Activated CD4-positive, alpha-beta T cell treated with anti-CD3 and anti-CD28 coated beads, Interleukin-2, amount 10 ng/mL, durations not matched to agents 24 days and 14 days (primary cell): ENCODE measurements at regions of chr1 and their contacts with region 1.

Region 1: DNA sequence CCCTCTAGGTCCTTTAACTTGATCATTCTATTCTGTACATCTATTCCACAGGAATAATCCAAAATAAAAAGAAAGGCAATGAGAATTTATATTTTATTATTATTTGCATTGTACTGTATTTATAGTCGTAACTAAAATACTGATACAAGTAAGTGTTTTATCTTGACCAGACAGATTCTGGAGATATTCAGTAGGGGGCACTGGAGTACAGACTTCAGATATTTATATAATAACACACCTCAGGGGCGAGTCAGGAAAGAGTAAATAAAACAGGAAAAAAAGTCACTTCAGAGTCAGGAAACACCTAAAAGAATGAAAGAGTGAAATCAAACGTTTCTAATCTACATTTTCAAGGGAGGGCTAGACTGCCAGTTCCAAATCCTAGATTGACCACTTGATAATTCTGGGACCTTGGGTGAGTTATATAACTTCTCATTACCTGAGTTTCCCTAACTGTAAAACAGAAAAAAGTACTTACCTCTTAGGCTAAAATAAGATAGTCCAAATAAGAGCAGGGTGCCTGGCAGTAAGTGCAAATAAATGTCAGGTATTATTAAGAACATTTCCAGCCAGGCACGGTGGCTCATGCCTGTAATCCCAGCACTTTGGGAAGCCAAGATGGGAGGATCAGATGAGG is 31.1 kb upstream of the MTF1 start:
- DNase-seq: peak; percentile 64
- H3K4me3 Mint-ChIP-seq: no peak overlapping the region
- H3K27ac Mint-ChIP-seq: no peak overlapping the region
- H3K4me1 Mint-ChIP-seq: no peaks in the 10 kb centered on the region
- H3K27me3 Mint-ChIP-seq: no peaks in the 10 kb centered on the region

Region 2: GRCh38 chr1:37851782-37852210 is 38.7 kb before region 1 on chr1:
- intact Hi-C with region 1: no loop called
- DNase-seq: peak; percentile 62
- H3K4me3 Mint-ChIP-seq: no peak overlapping the region
- H3K27ac Mint-ChIP-seq: no peak overlapping the region
- H3K4me1 Mint-ChIP-seq: peaks cover 25% of the 10 kb centered on the region
- H3K27me3 Mint-ChIP-seq: no peaks in the 10 kb centered on the region

Region 3: GRCh38 chr1:37926038-37926924 is 35.8 kb after region 1 on chr1:
- intact Hi-C with region 1: loop called (anchors 5 kb)
- DNase-seq: no peak
- H3K4me3 Mint-ChIP-seq: peak overlapping the region; percentile 20
- H3K27ac Mint-ChIP-seq: peak overlapping the region; percentile 36
- H3K4me1 Mint-ChIP-seq: peaks cover 41% of the 10 kb centered on the region
- H3K27me3 Mint-ChIP-seq: no peaks in the 10 kb centered on the region

Region 4: GRCh38 chr1:37974567-37974966 is 84.1 kb after region 1 on chr1:
- intact Hi-C with region 1: loop called (anchors 2 kb)
- DNase-seq: no peak
- H3K4me3 Mint-ChIP-seq: no peak overlapping the region
- H3K27ac Mint-ChIP-seq: no peak overlapping the region
- H3K4me1 Mint-ChIP-seq: peaks cover 19% of the 10 kb centered on the region
- H3K27me3 Mint-ChIP-seq: no peaks in the 10 kb centered on the region